Activated B cell treated with CpG ODN at 0.5 μM for 24 hours (primary cell): ENCODE measurements at regions of chr22 and their contacts with region 1.

Region 1: GRCh38 chr22:44497218-44497904 is 672 bp downstream of the RTL6 start:
- DNase-seq: no peak
- ATAC-seq: no peak
- H3K4me3 Mint-ChIP-seq: peak overlapping the region; percentile 81
- H3K27ac Mint-ChIP-seq: no peak overlapping the region
- H3K4me1 Mint-ChIP-seq: peaks cover 11% of the 10 kb centered on the region
- H3K27me3 Mint-ChIP-seq: peaks cover 11% of the 10 kb centered on the region
- CTCF ChIP-seq: no peak

Region 2: GRCh38 chr22:44684506-44685383 is 187.4 kb after region 1 on chr22:
- CTCF ChIA-PET with region 1: no interaction called
- POLR2A ChIA-PET with region 1: no interaction called
- intact Hi-C with region 1: loop called (anchors 2 kb)
- DNase-seq: peak; percentile 58
- ATAC-seq: peak; percentile 80
- H3K4me3 Mint-ChIP-seq: peak overlapping the region; percentile 47
- H3K27ac Mint-ChIP-seq: no peak overlapping the region
- H3K4me1 Mint-ChIP-seq: peaks cover 34% of the 10 kb centered on the region
- H3K27me3 Mint-ChIP-seq: peaks cover 3% of the 10 kb centered on the region
- CTCF ChIP-seq: peak; percentile 53